Dendritic cell treated with granulocyte-macrophage colony-stimulating factor and Interleukin-4, amounts not matched to agents 40 ng/mL and 50 ng/mL, for 4 days (primary cell): ENCODE measurements at regions of chr16 and their contacts with region 1.

Region 1: DNA sequence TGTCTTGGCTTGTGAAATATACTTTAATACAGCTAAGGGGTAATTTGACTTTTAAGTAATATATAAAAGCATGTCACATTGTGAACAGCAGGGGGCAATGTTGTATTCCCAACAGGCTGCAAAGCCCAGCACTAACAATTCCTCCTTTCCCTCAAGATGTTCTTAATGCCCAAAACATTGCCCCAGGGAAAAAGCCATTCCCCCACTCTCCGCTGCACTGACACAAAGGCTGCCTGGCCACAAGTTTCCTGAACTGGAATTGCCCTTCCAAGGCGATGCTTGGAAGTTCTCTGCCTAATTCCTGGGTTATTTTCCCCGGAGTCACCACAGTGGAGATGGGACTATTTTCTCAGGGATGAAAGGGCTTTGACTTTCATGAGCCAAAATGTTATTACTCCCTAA is 27.2 kb downstream of the CLEC16A start:
- H3K4me3 Mint-ChIP-seq: no peak overlapping the region
- H3K27ac Mint-ChIP-seq: peak overlapping the region; percentile 81
- H3K4me1 Mint-ChIP-seq: peaks cover 62% of the 10 kb centered on the region
- H3K27me3 Mint-ChIP-seq: no peaks in the 10 kb centered on the region

Region 2: DNA sequence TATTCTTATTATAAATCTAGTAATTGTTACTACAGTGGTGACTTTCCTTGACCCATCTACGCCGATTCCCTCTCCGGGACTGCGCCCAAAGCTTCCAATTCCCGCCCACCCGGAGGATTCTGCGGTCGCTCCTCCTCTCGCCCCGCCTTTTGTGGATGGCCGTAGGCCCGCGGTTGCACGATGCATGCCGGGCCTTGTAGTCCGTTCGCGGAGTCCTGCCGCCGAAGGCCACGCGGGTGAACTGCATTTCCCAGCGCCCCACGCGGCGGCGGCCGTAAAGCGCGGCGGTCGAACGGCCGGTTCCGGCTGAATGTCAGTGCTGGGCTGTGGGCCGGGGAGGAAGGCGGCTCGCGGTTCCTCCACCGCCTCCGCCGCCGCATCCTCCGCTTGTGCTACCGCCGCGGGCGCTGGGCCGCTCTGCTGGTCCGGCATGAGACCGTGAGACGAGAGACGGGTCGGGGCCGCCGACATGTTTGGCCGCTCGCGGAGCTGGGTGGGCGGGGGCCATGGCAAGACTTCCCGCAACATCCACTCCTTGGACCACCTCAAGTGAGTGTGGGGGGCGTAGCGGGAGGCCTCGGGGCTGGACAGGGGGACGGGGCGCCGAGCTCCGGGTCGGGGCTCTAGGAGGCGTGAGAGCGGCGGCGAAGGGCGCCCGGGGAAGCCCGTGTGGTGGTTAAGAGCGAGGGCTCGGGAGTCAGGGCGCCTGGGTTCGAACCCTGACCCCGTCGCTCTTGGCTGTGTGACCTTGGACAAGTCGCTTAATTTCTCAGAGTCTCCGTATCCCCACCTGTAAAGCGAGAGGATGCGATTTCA is 27.1 kb before region 1 on chr16 and contains the start of gene CLEC16A:
- intact Hi-C with region 1: no loop called
- H3K4me3 Mint-ChIP-seq: peak within 1 kb of the TSS; percentile 96
- H3K27ac Mint-ChIP-seq: peak within 1 kb of the TSS; percentile 93
- H3K4me1 Mint-ChIP-seq: peaks cover 74% of the 10 kb centered on the region
- H3K27me3 Mint-ChIP-seq: no peaks in the 10 kb centered on the region

Region 3: DNA sequence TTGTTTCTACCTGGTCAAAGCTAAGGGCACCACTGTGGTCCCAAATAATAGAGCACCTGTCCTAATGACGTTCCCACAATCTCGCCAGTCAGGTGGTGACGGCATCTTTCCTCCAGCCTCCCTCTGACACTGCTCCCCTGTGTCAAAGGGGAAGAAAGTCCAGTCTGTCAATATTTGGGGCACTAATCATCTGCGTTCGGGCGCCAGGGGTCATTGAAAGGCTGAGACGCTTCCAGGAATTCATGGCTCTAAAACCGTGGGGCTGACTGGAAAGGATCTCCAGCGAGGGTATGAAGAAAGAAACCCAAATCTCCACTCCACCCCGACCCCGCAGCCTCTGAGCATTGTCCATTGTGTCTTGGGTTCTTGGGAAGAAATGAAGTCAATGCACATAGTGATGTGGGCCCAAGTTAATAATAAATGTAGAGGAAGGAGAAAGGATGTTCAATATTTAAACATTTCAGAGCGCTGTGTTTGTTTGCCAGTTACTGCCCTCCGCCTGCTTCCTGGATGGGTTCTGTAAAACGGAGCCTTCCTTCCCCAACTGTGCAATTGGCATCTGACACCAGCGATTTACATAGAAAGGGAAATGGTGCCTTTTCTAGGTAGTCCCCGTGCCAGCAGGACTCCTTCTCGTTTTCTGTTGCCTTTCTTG is 181.2 kb after region 1 on chr16:
- intact Hi-C with region 1: loop called (anchors 5 kb)
- H3K4me3 Mint-ChIP-seq: peak overlapping the region; percentile 52
- H3K27ac Mint-ChIP-seq: peak overlapping the region; percentile 90
- H3K4me1 Mint-ChIP-seq: peaks cover 50% of the 10 kb centered on the region
- H3K27me3 Mint-ChIP-seq: no peaks in the 10 kb centered on the region

Region 4: DNA sequence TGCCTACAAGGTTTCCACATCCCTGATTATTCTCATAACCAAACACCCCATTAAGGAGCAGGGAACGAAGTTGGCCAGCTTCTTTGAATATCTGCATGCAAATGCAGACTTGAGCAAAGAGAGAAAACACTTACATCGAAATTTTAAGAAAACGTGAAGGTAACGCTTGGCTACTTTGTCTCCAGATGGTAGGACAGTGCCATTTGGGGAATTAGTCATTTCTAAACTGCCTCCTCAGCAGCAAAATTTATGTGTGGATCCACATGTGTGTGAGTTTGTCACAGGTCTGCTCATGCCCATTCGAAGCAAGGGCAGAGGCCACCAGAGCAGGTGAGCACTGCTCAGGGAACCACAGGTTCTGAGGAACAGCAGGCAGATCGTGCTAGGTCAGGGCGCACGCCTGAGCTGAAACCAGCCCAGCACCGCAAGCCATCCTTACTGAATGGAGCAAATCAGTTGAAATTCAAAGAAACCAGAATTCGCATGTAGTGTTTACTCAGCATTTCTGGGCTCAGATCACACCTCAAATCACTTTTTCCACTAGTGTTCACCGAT is 204.3 kb after region 1 on chr16:
- intact Hi-C with region 1: loop called (anchors 5 kb)
- H3K4me3 Mint-ChIP-seq: no peak overlapping the region
- H3K27ac Mint-ChIP-seq: peak overlapping the region; percentile 90
- H3K4me1 Mint-ChIP-seq: peaks cover 85% of the 10 kb centered on the region
- H3K27me3 Mint-ChIP-seq: no peaks in the 10 kb centered on the region